Gastrocnemius medialis (tissue), 4 donors: ENCODE measurements at regions of chr9 and their contacts with region 1.

Region 1: GRCh38 chr9:13607481-13608441 is 328.3 kb upstream of the MPDZ start:
- DNase-seq: no peak
- ATAC-seq: peak; percentile 89 to 95
- H3K4me3 ChIP-seq: peak overlapping the region; percentile 1 to 50 (median 32)
- H3K27ac ChIP-seq: peak overlapping the region; percentile 60 to 74 (median 67)
- H3K4me1 ChIP-seq: peaks cover 25 to 31% of the 10 kb centered on the region in 2 donors
- H3K27me3 ChIP-seq: no peaks in the 10 kb centered on the region
- CTCF ChIP-seq: no peak
- POLR2A ChIP-seq: no peak

Region 2: GRCh38 chr9:13575558-13575957 is 32.2 kb before region 1 on chr9:
- in situ Hi-C with region 1: no loop called
- intact Hi-C with region 1: no loop called
- DNase-seq: no peak
- ATAC-seq: peak; percentile 33 to 74
- H3K4me3 ChIP-seq: no peak overlapping the region
- H3K27ac ChIP-seq: peak overlapping the region in 3 of 4 donors; percentile 25 to 63 (median 49)
- H3K4me1 ChIP-seq: peaks cover 0 to 4% of the 10 kb centered on the region in 2 donors
- H3K27me3 ChIP-seq: no peaks in the 10 kb centered on the region
- CTCF ChIP-seq: no peak
- POLR2A ChIP-seq: no peak

Region 3: GRCh38 chr9:13728917-13729811 is 121.4 kb after region 1 on chr9:
- in situ Hi-C with region 1: no loop called
- intact Hi-C with region 1: loop called (anchors 5 kb)
- DNase-seq: peak; percentile 64 to 71
- ATAC-seq: peak; percentile 91 to 94
- H3K4me3 ChIP-seq: no peak overlapping the region
- H3K27ac ChIP-seq: peak overlapping the region; percentile 65 to 83 (median 73)
- H3K4me1 ChIP-seq: peaks cover 14 to 21% of the 10 kb centered on the region in 2 donors
- H3K27me3 ChIP-seq: no peaks in the 10 kb centered on the region
- CTCF ChIP-seq: no peak
- POLR2A ChIP-seq: peak; percentile 50 to 60